Naive thymus-derived CD4-positive, alpha-beta T cell (primary cell): ENCODE measurements at regions of chr3 and their contacts with region 1.

Region 1: GRCh38 chr3:42581709-42582473 is at the start of gene SEC22C:
- DNase-seq: peak; percentile 86 to 95 (median 94)
- ATAC-seq: peak; percentile 94
- H3K4me3 ChIP-seq: peak within 1 kb of the TSS; percentile 86
- H3K4me3 Mint-ChIP-seq: peak within 1 kb of the TSS; percentile 77 to 97 (median 94)
- H3K27ac ChIP-seq: peak within 1 kb of the TSS; percentile 92
- H3K27ac Mint-ChIP-seq: peak within 1 kb of the TSS; percentile 89 to 99 (median 96)
- H3K4me1 ChIP-seq: peaks cover 19 to 25% of the 10 kb centered on the region in 2 donors
- H3K4me1 Mint-ChIP-seq: peaks cover 31 to 60% (median 57%) of the 10 kb centered on the region in 7 donors
- H3K27me3 ChIP-seq: no peaks in the 10 kb centered on the region
- H3K27me3 Mint-ChIP-seq: no peaks in the 10 kb centered on the region
- total RNA-seq, gene SEC22C: 39.7 to 54.8 (median 51.3) TPM

Region 2: GRCh38 chr3:42613462-42613861 is 31.6 kb after region 1 on chr3:
- CTCF ChIA-PET with region 1: interaction called, 4 read pairs
- POLR2A ChIA-PET with region 1: no interaction called
- intact Hi-C with region 1: loop called in 1 of 2 experiments (anchors 1 kb)
- DNase-seq: peak in 1 of 9 donors; percentile 17
- ATAC-seq: peak; percentile 63
- H3K4me3 ChIP-seq: no peak overlapping the region
- H3K4me3 Mint-ChIP-seq: peak overlapping the region in 2 of 10 donors; percentile 1 to 38
- H3K27ac ChIP-seq: no peak overlapping the region
- H3K27ac Mint-ChIP-seq: peak overlapping the region in 5 of 9 donors; percentile 1 to 49 (median 4)
- H3K4me1 ChIP-seq: peaks cover 14 to 15% of the 10 kb centered on the region in 2 donors
- H3K4me1 Mint-ChIP-seq: peaks cover 40 to 84% (median 64%) of the 10 kb centered on the region in 7 donors
- H3K27me3 ChIP-seq: no peaks in the 10 kb centered on the region
- H3K27me3 Mint-ChIP-seq: no peaks in the 10 kb centered on the region

Region 3: GRCh38 chr3:42701142-42702065 is 119.5 kb after region 1 on chr3:
- CTCF ChIA-PET with region 1: no interaction called
- POLR2A ChIA-PET with region 1: no interaction called
- intact Hi-C with region 1: loop called in 1 of 2 experiments (anchors 1 kb)
- DNase-seq: peak; percentile 31 to 74 (median 52)
- ATAC-seq: peak; percentile 72
- H3K4me3 ChIP-seq: no peak overlapping the region
- H3K4me3 Mint-ChIP-seq: no peak overlapping the region
- H3K27ac ChIP-seq: no peak overlapping the region
- H3K27ac Mint-ChIP-seq: peak overlapping the region in 1 of 9 donors; percentile 49
- H3K4me1 ChIP-seq: peaks cover 0 to 6% of the 10 kb centered on the region in 2 donors
- H3K4me1 Mint-ChIP-seq: peaks cover 0 to 15% (median 5%) of the 10 kb centered on the region in 7 donors
- H3K27me3 ChIP-seq: no peaks in the 10 kb centered on the region
- H3K27me3 Mint-ChIP-seq: peaks cover 0 to 7% (median 4%) of the 10 kb centered on the region in 5 donors

Region 4: GRCh38 chr3:43105596-43106292 is 523.9 kb after region 1 on chr3 and contains the start of gene POMGNT2:
- CTCF ChIA-PET with region 1: no interaction called
- POLR2A ChIA-PET with region 1: no interaction called
- intact Hi-C with region 1: loop called in 1 of 2 experiments (anchors 2 kb)
- DNase-seq: peak; percentile 78 to 92 (median 88)
- ATAC-seq: peak; percentile 97
- H3K4me3 ChIP-seq: peak within 1 kb of the TSS; percentile 67
- H3K4me3 Mint-ChIP-seq: peak within 1 kb of the TSS; percentile 70 to 88 (median 85)
- H3K27ac ChIP-seq: peak within 1 kb of the TSS; percentile 76
- H3K27ac Mint-ChIP-seq: peak within 1 kb of the TSS in 8 of 9 donors; percentile 46 to 91 (median 71)
- H3K4me1 ChIP-seq: peaks cover 9 to 18% of the 10 kb centered on the region in 2 donors
- H3K4me1 Mint-ChIP-seq: peaks cover 11 to 38% (median 21%) of the 10 kb centered on the region in 7 donors
- H3K27me3 ChIP-seq: no peaks in the 10 kb centered on the region
- H3K27me3 Mint-ChIP-seq: peaks cover 0 to 9% (median 0%) of the 10 kb centered on the region in 5 donors
- total RNA-seq, gene POMGNT2: 3.5 to 7.9 (median 6.2) TPM